Activated T-helper 1 cell treated with anti-CD3 and anti-CD28 coated beads, Interleukin-12 subunit alpha, Interleukin-12 subunit beta, Interleukin-2, Interleukin-4 antibody, amounts not matched to agents 30 ng/mL and 10 ng/mL and 1 ng/mL, durations not matched to agents 14 hours and 24 hours and 36 hours (primary cell): ENCODE measurements at regions of chr22 and their contacts with region 1.

Region 1: GRCh38 chr22:40463017-40463631 is 92.7 kb downstream of the SGSM3 start:
- DNase-seq: peak; percentile 37
- H3K4me3 Mint-ChIP-seq: peak overlapping the region; percentile 93
- H3K27ac Mint-ChIP-seq: peak overlapping the region; percentile 99
- H3K4me1 Mint-ChIP-seq: peaks cover 55% of the 10 kb centered on the region
- H3K27me3 Mint-ChIP-seq: no peaks in the 10 kb centered on the region

Region 2: GRCh38 chr22:40177738-40178416 is 285.2 kb before region 1 on chr22 and contains the start of gene TNRC6B:
- intact Hi-C with region 1: no loop called
- DNase-seq: peak; percentile 79
- H3K4me3 Mint-ChIP-seq: peak within 1 kb of the TSS; percentile 87
- H3K27ac Mint-ChIP-seq: peak within 1 kb of the TSS; percentile 92
- H3K4me1 Mint-ChIP-seq: peaks cover 56% of the 10 kb centered on the region
- H3K27me3 Mint-ChIP-seq: no peaks in the 10 kb centered on the region
- total RNA-seq, gene TNRC6B: 26.2 and 30.9 TPM in 2 replicates

Region 3: DNA sequence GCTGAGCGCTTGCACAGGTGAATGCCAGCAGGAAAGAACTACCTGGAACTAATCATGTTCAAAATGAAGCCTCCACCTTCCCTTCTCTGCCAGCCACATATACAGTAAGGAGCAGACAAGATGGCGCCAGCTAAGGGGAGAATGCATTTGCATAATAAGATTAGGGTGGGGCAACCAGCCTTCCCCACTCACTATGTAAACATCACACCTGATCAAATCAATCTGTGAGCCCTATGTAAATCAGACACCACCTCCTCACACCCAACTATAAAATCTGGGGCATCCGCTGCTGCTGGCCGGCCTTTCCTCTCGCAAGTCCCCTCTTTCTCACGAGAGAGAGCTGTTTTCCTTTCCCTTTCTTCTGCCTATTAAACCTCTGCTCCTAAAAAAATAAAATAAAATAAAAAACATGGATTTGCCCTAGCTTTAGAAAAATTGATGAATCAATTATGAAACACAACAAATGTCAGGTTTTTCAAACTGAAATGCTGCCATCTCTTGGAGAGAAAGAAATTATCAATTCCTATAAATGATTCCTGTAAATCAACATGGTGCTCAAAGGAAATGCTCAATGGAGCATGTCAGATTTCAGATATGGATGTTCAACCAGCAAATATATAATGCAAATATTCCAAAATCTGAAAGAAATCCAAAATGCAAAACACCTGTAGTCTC is 16.1 kb after region 1 on chr22:
- intact Hi-C with region 1: loop called (anchors 2 kb)
- DNase-seq: no peak
- H3K4me3 Mint-ChIP-seq: no peak overlapping the region
- H3K27ac Mint-ChIP-seq: no peak overlapping the region
- H3K4me1 Mint-ChIP-seq: peaks cover 30% of the 10 kb centered on the region
- H3K27me3 Mint-ChIP-seq: no peaks in the 10 kb centered on the region

Region 4: DNA sequence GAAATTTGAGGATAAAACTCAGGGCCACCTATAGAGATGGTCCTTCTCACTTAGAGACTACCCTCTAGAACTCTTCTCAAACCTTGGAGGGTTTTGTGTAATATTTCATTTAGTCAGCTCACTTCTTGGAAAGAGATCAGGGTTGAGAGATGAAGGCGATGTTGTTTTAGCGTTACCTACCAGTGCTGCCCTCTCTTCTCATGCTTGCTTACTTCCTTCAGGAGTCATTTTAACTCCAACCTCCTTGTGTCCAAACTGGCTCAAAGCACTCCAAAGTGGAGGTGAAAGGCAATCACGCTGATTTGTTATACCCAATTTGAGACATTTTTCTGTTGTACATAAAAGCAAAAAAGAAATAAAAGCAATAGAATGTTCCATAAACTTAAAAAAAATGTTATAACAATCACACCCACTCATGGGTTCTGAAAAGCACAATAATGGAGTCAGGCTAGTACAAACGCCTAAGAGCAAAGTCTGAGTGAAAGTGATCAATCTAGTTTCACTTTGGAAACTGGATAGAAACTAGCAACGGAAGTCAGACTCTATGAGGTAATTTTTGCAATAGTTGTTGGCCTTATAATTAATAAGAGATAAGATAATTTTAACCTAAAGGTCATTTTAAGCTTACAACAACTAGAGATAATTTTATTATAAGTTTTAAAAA is 56.3 kb after region 1 on chr22:
- intact Hi-C with region 1: loop called (anchors 1 kb)
- DNase-seq: no peak
- H3K4me3 Mint-ChIP-seq: peak overlapping the region; percentile 50
- H3K27ac Mint-ChIP-seq: peak overlapping the region; percentile 83
- H3K4me1 Mint-ChIP-seq: peaks cover 26% of the 10 kb centered on the region
- H3K27me3 Mint-ChIP-seq: no peaks in the 10 kb centered on the region

Region 5: GRCh38 chr22:41603873-41604332 is 1140.8 kb after region 1 on chr22:
- intact Hi-C with region 1: loop called (anchors 5 kb)
- DNase-seq: peak; percentile 66
- H3K4me3 Mint-ChIP-seq: no peak overlapping the region
- H3K27ac Mint-ChIP-seq: peak overlapping the region; percentile 62
- H3K4me1 Mint-ChIP-seq: peaks cover 44% of the 10 kb centered on the region
- H3K27me3 Mint-ChIP-seq: peaks cover 9% of the 10 kb centered on the region